Sigmoid colon (tissue), 7 donors: ENCODE measurements at regions of chr14 and their contacts with region 1.

Region 1: DNA sequence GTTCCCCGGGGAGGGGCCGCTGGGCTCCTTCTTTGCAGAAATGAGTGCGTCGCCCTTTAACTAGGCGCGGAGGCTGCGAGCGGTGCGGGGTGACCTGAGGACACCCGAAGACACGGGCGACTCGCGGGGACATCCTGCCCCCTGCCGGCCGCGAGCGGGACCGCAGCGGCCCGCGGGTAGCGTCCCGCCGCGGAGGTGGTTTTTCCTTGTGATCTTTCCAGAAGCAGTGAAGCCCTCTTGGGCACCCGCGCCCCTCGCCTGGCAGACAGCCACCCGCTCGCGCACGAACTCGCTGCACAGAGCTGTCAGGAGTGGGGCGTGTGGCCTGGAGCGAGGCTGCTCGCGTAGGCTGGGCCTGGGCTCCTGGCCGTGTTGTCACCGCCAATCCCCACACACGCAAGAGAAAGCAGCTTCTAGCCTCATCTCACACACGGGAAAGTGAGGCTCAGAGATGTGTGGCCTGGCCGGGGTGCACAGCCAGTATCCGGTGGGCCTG is 67.2 kb downstream of the DIO3 start:
- DNase-seq: peak; percentile 85
- H3K4me3 ChIP-seq: peak overlapping the region in 3 of 4 donors; percentile 17 to 34 (median 33)
- H3K27ac ChIP-seq: peak overlapping the region in 1 of 4 donors; percentile 6
- H3K4me1 ChIP-seq: peaks cover 0 to 14% (median 11%) of the 10 kb centered on the region in 4 donors
- H3K27me3 ChIP-seq: no peaks in the 10 kb centered on the region
- CTCF ChIP-seq: peak; percentile 89 to 99 (median 96)
- EP300 ChIP-seq: no peak
- POLR2A ChIP-seq: no peak

Region 2: DNA sequence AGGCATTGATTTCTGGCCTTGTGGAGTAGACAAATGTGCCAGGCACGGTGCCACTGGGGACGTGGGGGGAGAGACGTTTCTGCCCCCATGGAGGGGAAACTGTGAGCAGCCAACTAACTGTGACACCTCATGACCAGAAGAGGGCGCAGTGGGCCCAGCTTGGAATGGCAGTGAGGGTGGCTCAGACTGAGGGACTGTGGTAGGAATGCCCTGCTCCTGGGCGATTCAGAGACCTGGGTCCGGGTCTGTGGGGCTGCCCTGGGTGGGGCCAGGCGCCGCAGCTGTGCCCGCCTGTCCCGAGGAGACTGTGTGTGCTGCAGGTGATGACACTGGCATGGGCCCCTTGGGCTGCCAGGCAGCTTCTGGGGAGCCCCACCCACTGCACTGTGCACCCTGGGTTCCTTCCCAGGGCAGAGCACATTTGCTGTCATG is 1244.8 kb before region 1 on chr14:
- intact Hi-C with region 1: loop called (anchors 1 kb)
- DNase-seq: peak; percentile 74
- H3K4me3 ChIP-seq: no peak overlapping the region
- H3K27ac ChIP-seq: no peak overlapping the region
- H3K4me1 ChIP-seq: peaks cover 0 to 20% (median 5%) of the 10 kb centered on the region in 4 donors
- H3K27me3 ChIP-seq: no peaks in the 10 kb centered on the region
- CTCF ChIP-seq: peak; percentile 15 to 80 (median 65)
- EP300 ChIP-seq: no peak
- POLR2A ChIP-seq: no peak

Region 3: GRCh38 chr14:100662879-100663760 is 965.4 kb before region 1 on chr14:
- intact Hi-C with region 1: loop called (anchors 5 kb)
- DNase-seq: peak; percentile 77
- H3K4me3 ChIP-seq: no peak overlapping the region
- H3K27ac ChIP-seq: no peak overlapping the region
- H3K4me1 ChIP-seq: peaks cover 0 to 21% (median 17%) of the 10 kb centered on the region in 4 donors
- H3K27me3 ChIP-seq: peaks cover 0 to 32% (median 13%) of the 10 kb centered on the region in 3 donors
- CTCF ChIP-seq: peak; percentile 62 to 90 (median 80)
- EP300 ChIP-seq: no peak
- POLR2A ChIP-seq: no peak

Region 4: DNA sequence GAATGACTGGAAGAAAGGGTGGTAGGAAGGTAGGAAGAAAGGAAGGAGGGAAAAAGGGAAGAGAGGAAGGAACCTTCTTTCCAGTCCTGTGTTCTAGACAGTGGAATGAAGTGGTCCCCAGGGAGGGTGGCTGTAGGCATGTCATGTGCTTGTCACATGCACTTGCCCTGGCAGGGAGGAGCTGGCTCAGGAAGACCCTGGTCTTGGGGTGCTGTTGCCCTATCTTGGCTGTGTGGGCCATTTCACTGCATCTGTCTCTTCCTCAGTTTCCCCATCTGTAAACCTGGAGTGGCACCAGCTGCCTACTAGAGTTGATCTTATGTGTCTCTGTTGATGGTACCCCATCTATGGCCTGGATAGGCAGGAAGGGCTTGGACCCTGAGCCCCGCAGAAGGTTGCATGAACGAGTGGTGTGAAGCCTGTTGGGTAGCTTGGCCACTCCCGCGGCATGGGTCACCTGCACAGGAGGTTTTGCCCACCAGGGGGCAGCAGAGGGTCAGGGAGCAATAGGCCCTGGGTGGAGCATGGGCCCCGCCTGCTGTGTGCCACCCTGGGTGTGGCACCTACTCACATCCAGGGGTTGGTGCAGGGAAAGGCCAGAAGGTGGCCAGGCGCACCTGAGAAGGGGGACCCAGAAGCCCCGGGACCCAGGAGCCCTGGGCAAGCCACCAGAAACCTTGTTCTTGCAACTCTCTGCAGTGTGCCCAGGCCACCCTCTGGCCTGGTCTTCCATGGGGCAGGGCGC is 777.5 kb before region 1 on chr14:
- intact Hi-C with region 1: loop called (anchors 1 kb)
- DNase-seq: peak; percentile 83
- H3K4me3 ChIP-seq: no peak overlapping the region
- H3K27ac ChIP-seq: no peak overlapping the region
- H3K4me1 ChIP-seq: no peaks in the 10 kb centered on the region
- H3K27me3 ChIP-seq: no peaks in the 10 kb centered on the region
- CTCF ChIP-seq: peak; percentile 55 to 76 (median 72)
- EP300 ChIP-seq: no peak
- POLR2A ChIP-seq: no peak

Region 5: DNA sequence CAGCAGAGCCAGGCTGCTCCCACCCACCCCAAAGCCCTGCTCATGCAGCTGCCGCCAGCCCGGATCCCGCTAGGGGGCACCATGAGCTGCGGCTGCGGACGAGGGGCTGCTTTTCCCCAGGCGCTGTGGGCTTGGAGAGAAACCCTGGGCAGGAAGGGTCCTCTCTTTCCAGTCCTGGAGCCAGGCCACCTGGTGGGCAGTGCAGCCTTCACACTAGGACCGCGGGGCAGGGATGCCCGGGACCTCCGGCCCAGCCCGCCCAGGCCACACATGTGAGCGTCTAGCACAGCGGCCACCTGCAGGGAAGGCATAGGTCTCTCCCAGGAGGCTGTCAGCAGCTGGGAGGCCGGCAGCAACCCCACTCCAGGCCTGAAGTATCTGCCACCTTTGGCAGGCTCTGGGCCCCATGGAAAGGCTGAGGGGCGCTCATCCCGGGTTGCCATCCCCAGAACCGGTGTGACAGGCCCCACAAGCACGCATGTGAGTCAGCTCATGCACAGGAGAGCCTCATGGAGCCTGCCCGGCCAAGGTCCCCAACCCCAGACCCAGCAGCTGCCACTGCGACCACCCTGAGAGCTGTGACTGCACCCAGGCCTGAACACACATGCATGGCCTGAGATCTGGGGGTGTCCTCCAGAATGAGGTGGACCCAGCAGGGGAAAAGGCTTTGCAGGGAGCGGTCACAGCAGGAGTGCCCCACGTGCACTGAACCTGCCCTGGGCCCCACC is 445.0 kb before region 1 on chr14:
- intact Hi-C with region 1: loop called (anchors 10 kb)
- DNase-seq: no peak
- H3K4me3 ChIP-seq: no peak overlapping the region
- H3K27ac ChIP-seq: no peak overlapping the region
- H3K4me1 ChIP-seq: no peaks in the 10 kb centered on the region
- H3K27me3 ChIP-seq: peaks cover 0 to 3% (median 0%) of the 10 kb centered on the region in 3 donors
- CTCF ChIP-seq: peak; percentile 44 to 52 (median 48)
- EP300 ChIP-seq: no peak
- POLR2A ChIP-seq: no peak

Region 6: GRCh38 chr14:101458526-101459391 is 169.8 kb before region 1 on chr14:
- intact Hi-C with region 1: no loop called
- DNase-seq: no peak
- H3K4me3 ChIP-seq: peak overlapping the region in 2 of 4 donors; percentile 24 to 27
- H3K27ac ChIP-seq: no peak overlapping the region
- H3K4me1 ChIP-seq: peaks cover 0 to 21% (median 15%) of the 10 kb centered on the region in 4 donors
- H3K27me3 ChIP-seq: peaks cover 33 to 68% (median 53%) of the 10 kb centered on the region in 3 donors
- CTCF ChIP-seq: no peak
- EP300 ChIP-seq: no peak
- POLR2A ChIP-seq: no peak

Region 7: DNA sequence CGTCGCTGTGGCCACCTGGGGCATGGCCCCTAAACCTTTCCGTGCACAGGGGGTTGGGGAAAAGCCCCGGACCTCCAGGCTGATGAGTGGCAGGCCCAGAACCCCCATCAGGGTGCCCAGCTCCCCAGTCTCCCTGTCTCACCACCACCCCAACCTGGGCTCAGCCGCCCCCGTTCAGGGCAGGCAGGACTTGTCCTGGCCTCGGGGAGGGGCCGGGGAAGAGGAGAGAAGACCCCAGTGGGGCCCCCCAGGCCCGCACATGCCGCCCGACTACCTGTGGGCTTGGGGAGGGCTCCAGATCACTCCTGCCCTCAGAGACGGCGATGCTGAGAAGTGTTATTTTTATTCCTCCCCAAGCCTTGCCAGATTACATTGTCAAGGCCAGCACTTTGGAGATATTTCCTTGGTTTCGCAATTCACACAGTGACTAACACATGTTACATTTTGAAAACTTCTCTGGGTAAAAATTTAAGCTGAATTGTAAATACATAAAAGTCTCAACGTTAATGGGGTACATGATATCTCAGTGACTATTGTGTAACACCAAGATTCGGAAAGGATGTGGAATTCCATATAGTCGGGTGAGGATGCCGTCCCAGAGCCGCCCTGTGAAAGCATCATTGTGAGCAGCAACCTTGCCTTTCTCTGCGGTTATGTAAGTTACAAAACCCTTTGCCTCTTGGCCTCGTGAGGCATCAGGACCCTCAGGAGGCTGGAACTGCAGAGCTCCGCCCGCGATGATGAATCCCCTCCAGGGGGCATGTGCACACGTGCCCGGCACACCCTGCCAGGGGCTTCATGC is 152.9 kb before region 1 on chr14:
- intact Hi-C with region 1: no loop called
- DNase-seq: peak; percentile 72
- H3K4me3 ChIP-seq: no peak overlapping the region
- H3K27ac ChIP-seq: peak overlapping the region in 2 of 4 donors; percentile 20 to 33
- H3K4me1 ChIP-seq: peaks cover 0 to 3% (median 0%) of the 10 kb centered on the region in 4 donors
- H3K27me3 ChIP-seq: peaks cover 0 to 9% (median 0%) of the 10 kb centered on the region in 3 donors
- CTCF ChIP-seq: no peak
- EP300 ChIP-seq: no peak
- POLR2A ChIP-seq: no peak